Esophagus squamous epithelium (tissue), 5 donors: ENCODE measurements at regions of chr4 and their contacts with region 1.

Region 1: GRCh38 chr4:6087673-6088341 is 69.6 kb upstream of the C4orf50 start:
- DNase-seq: no peak
- H3K4me3 ChIP-seq: no peak overlapping the region
- H3K27ac ChIP-seq: no peak overlapping the region
- H3K4me1 ChIP-seq: no peaks in the 10 kb centered on the region
- H3K27me3 ChIP-seq: peaks cover 0 to 15% (median 0%) of the 10 kb centered on the region in 4 donors
- CTCF ChIP-seq: peak in 5 of 6 experiments; percentile 52 to 80 (median 63)
- POLR2A ChIP-seq: no peak

Region 2: DNA sequence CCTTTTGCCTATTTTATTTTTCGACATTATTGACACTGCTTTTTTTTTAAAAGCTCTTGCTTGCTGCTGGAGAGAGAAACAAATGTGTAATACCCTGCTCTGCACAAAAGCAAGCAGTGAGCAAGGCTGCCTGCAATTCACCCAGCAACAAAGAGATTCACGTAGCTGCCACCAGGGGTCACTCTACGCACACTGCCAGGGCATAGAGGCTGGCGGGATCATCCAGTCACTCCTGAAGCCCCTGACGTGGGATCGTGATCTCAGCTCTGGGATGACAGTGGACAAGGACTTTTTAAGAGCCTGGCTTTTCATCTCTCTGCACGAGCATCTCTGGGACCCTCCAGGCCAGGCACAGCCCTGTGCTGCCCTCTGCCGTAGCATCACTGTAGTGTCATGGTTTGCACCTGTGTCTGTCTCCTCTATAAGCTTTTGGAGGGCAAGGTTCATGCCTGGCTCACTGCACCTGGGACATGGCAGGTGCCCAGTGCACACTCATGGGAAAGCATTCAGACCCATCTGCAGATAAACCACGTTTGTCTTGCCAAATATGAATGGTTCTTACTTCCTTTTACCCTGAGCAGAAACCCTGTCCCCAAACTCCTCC is 89.4 kb before region 1 on chr4:
- intact Hi-C with region 1: loop called (anchors 5 kb)
- DNase-seq: no peak
- H3K4me3 ChIP-seq: no peak overlapping the region
- H3K27ac ChIP-seq: no peak overlapping the region
- H3K4me1 ChIP-seq: peaks cover 0 to 6% (median 0%) of the 10 kb centered on the region in 3 donors
- H3K27me3 ChIP-seq: peaks cover 0 to 67% (median 0%) of the 10 kb centered on the region in 4 donors
- CTCF ChIP-seq: peak; percentile 67 to 93 (median 85)
- POLR2A ChIP-seq: no peak